ENCODE measurements at regions of chr6 and their contacts with region 1.

Region 1: DNA sequence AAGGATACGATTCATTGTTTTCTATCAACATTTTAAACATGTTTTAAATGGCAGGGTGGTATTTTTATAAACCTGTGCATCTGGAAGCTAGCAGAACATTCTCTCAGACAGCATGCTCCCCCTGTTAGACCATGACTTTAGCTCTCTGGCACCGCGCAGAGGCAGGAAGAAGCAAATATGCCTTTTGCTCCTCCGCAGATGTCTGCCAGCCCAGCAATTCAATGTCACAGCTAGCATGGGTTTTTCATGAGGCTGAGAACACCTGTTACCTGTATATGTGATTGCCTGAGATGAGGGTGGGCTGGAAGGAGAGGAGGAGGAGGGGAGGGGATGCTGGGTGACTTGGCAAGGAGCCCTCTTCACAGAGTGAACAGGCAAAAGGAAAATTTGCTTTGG is 6.7 kb downstream of the MTCH1 start:
- DNase-seq: no peak

Region 2: GRCh38 chr6:36885461-36886401 is 93.6 kb before region 1 on chr6 and contains the start of gene C6orf89:
- intact Hi-C with region 1: loop called (anchors 2 kb)
- DNase-seq: peak; percentile 99
- total RNA-seq, gene C6orf89: 49.2 TPM

Region 3: GRCh38 chr6:36907781-36908180 is 71.6 kb before region 1 on chr6:
- intact Hi-C with region 1: loop called (anchors 5 kb)
- DNase-seq: peak; percentile 78